B cell (primary cell): ENCODE measurements at regions of chr13 and their contacts with region 1.

Region 1: GRCh38 chr13:91417660-91418325 is 19.4 kb downstream of the GPC5 start:
- DNase-seq: no peak
- ATAC-seq: no peak
- H3K4me3 ChIP-seq: no peak overlapping the region
- H3K4me3 Mint-ChIP-seq: no peak overlapping the region
- H3K27ac ChIP-seq: no peak overlapping the region
- H3K27ac Mint-ChIP-seq: no peak overlapping the region
- H3K4me1 ChIP-seq: no peaks in the 10 kb centered on the region
- H3K4me1 Mint-ChIP-seq: no peaks in the 10 kb centered on the region
- H3K27me3 ChIP-seq: no peaks in the 10 kb centered on the region
- H3K27me3 Mint-ChIP-seq: peaks cover 14% of the 10 kb centered on the region
- CTCF ChIP-seq: no peak

Region 2: GRCh38 chr13:91045351-91046034 is 372.3 kb before region 1 on chr13:
- CTCF ChIA-PET with region 1: no interaction called
- POLR2A ChIA-PET with region 1: no interaction called
- intact Hi-C with region 1: no loop called
- DNase-seq: no peak
- ATAC-seq: no peak
- H3K4me3 ChIP-seq: no peak overlapping the region
- H3K4me3 Mint-ChIP-seq: no peak overlapping the region
- H3K27ac ChIP-seq: no peak overlapping the region
- H3K27ac Mint-ChIP-seq: no peak overlapping the region
- H3K4me1 ChIP-seq: no peaks in the 10 kb centered on the region
- H3K4me1 Mint-ChIP-seq: no peaks in the 10 kb centered on the region
- H3K27me3 ChIP-seq: no peaks in the 10 kb centered on the region
- H3K27me3 Mint-ChIP-seq: no peaks in the 10 kb centered on the region
- CTCF ChIP-seq: no peak

Region 3: DNA sequence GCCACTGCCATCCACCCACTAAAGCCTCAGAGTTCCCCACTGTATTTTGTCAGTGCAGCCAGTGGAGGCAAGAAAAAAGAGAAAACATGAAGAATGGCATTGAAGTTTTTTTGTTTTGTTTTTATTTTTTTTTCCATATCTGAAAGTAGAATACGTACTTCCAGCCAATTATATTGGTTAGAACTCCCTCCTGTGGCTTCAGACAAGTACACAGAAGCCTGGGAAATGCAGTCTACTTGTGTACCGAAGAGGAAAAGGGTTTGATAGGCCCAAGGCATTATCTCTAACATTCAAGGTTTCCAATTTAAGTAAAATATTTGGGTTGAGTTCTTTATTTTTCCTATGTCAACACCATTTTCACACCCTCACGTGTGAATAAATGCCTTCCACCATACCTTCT is 1112.6 kb after region 1 on chr13:
- CTCF ChIA-PET with region 1: no interaction called
- POLR2A ChIA-PET with region 1: no interaction called
- intact Hi-C with region 1: loop called (anchors 10 kb)
- DNase-seq: no peak
- ATAC-seq: no peak
- H3K4me3 ChIP-seq: no peak overlapping the region
- H3K4me3 Mint-ChIP-seq: no peak overlapping the region
- H3K27ac ChIP-seq: no peak overlapping the region
- H3K27ac Mint-ChIP-seq: no peak overlapping the region
- H3K4me1 ChIP-seq: no peaks in the 10 kb centered on the region
- H3K4me1 Mint-ChIP-seq: no peaks in the 10 kb centered on the region
- H3K27me3 ChIP-seq: no peaks in the 10 kb centered on the region
- H3K27me3 Mint-ChIP-seq: no peaks in the 10 kb centered on the region
- CTCF ChIP-seq: no peak